Panc1 (cell line): ENCODE measurements at regions of chr9 and their contacts with region 1.

Region 1: DNA sequence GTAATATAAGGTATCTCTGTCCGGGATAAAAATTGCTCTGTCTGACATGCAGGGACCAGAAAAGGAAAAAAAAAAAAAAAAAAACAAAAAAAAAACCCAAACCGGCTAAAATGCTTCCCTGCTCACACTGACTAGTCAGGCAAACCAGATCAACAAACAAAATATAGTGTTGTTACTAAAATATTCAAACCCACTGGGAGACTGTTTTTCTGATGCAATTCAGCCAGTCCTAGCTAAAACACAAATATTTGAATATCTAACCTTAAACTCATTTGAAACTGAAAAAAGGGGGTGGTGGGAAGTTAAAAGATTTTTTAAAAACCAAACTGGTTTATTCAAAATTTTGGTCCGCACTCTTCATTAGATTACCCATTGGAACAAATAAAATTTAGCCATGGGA is 61.0 kb downstream of the APBA1 start:
- DNase-seq: no peak
- ATAC-seq: no peak
- H3K4me3 ChIP-seq: no peak overlapping the region
- H3K27ac ChIP-seq: no peak overlapping the region
- H3K4me1 ChIP-seq: no peaks in the 10 kb centered on the region
- H3K27me3 ChIP-seq: no peaks in the 10 kb centered on the region
- CTCF ChIP-seq: no peak

Region 2: GRCh38 chr9:69564557-69564956 is 46.7 kb before region 1 on chr9:
- CTCF ChIA-PET with region 1: no interaction called
- POLR2A ChIA-PET with region 1: no interaction called
- in situ Hi-C with region 1: no loop called
- intact Hi-C with region 1: loop called (anchors 5 kb)
- DNase-seq: no peak
- ATAC-seq: no peak
- H3K4me3 ChIP-seq: no peak overlapping the region
- H3K27ac ChIP-seq: no peak overlapping the region
- H3K4me1 ChIP-seq: no peaks in the 10 kb centered on the region
- H3K27me3 ChIP-seq: no peaks in the 10 kb centered on the region
- CTCF ChIP-seq: no peak

Region 3: DNA sequence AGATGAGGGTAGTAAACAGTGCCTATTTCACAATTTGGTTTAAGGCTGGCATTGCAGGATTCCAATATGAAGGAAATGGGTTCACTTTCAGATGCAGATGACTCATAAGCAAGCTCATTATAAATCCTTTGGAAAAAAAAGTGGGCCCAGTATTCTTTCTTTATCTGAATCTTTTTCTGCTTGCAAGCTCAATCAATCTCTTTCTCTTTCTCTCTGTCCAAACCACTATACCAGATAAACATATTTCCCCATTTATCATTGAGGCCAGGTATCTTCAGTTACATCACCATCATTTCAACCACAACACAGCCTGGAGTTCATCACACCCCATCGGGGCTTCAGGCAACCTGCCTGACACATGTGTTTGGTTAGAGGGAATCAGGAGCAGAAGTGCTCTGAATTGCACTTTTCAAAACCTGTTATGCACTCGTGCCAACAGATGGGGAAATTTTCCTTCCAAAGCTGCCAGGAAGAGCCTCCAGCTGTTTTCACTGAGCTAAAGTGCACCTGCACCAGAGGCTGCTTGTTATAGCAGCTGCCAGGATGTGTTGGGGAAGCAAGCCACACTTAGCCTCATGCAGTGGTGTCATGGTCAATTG is 402.5 kb after region 1 on chr9:
- CTCF ChIA-PET with region 1: no interaction called
- POLR2A ChIA-PET with region 1: no interaction called
- in situ Hi-C with region 1: no loop called
- intact Hi-C with region 1: no loop called
- DNase-seq: no peak
- ATAC-seq: no peak
- H3K4me3 ChIP-seq: no peak overlapping the region
- H3K27ac ChIP-seq: no peak overlapping the region
- H3K4me1 ChIP-seq: no peaks in the 10 kb centered on the region
- H3K27me3 ChIP-seq: no peaks in the 10 kb centered on the region
- CTCF ChIP-seq: no peak